ENCODE measurements at regions of chr3 and their contacts with region 1.

Region 1: GRCh38 chr3:37210230-37210629 is 35.8 kb upstream of the LRRFIP2 start:
- DNase-seq: no peak
- H3K4me3 ChIP-seq: no peak overlapping the region
- H3K27ac ChIP-seq: no peak overlapping the region
- H3K4me1 ChIP-seq: no peaks in the 10 kb centered on the region
- CTCF ChIP-seq: no peak

Region 2: GRCh38 chr3:36729204-36730056 is 480.8 kb before region 1 on chr3:
- CTCF ChIA-PET with region 1: no interaction called
- POLR2A ChIA-PET with region 1: no interaction called
- intact Hi-C with region 1: loop called (anchors 1 kb)
- DNase-seq: peak; percentile 55
- H3K4me3 ChIP-seq: no peak overlapping the region
- H3K27ac ChIP-seq: no peak overlapping the region
- H3K4me1 ChIP-seq: no peaks in the 10 kb centered on the region
- CTCF ChIP-seq: peak; percentile 92

Region 3: GRCh38 chr3:37024092-37024491 is 186.1 kb before region 1 on chr3:
- CTCF ChIA-PET with region 1: no interaction called
- POLR2A ChIA-PET with region 1: interaction called, 3 read pairs
- intact Hi-C with region 1: loop called (anchors 2 kb)
- DNase-seq: peak; percentile 16
- H3K4me3 ChIP-seq: no peak overlapping the region
- H3K27ac ChIP-seq: peak overlapping the region; percentile 32
- H3K4me1 ChIP-seq: peaks cover 17% of the 10 kb centered on the region
- CTCF ChIP-seq: peak; percentile 50

Region 4: GRCh38 chr3:37054370-37054769 is 155.9 kb before region 1 on chr3:
- CTCF ChIA-PET with region 1: no interaction called
- POLR2A ChIA-PET with region 1: no interaction called
- intact Hi-C with region 1: loop called (anchors 10 kb)
- DNase-seq: peak; percentile 22
- H3K4me3 ChIP-seq: no peak overlapping the region
- H3K27ac ChIP-seq: no peak overlapping the region
- H3K4me1 ChIP-seq: peaks cover 12% of the 10 kb centered on the region
- CTCF ChIP-seq: no peak

Region 5: DNA sequence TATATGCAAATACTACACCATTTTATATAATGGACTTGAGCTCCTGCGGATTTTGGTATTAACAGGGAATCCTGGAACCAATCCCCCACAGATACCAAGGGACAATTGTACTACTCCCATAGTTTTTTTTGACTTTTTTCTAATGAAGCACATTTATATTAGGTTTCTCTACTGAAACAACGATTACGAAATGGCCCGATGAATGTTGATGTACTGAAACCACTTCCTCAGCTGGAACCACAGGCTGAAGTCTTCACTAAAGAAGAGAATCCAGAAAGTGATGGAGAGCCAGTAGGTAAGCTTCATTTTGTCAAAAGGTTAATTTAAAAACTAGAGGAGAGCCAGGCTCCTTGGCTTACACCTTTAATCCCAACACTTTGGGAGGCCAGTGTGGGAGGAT is 85.7 kb after region 1 on chr3:
- CTCF ChIA-PET with region 1: no interaction called
- POLR2A ChIA-PET with region 1: no interaction called
- intact Hi-C with region 1: no loop called
- DNase-seq: no peak
- H3K4me3 ChIP-seq: no peak overlapping the region
- H3K27ac ChIP-seq: no peak overlapping the region
- H3K4me1 ChIP-seq: no peaks in the 10 kb centered on the region
- CTCF ChIP-seq: no peak

Region 6: DNA sequence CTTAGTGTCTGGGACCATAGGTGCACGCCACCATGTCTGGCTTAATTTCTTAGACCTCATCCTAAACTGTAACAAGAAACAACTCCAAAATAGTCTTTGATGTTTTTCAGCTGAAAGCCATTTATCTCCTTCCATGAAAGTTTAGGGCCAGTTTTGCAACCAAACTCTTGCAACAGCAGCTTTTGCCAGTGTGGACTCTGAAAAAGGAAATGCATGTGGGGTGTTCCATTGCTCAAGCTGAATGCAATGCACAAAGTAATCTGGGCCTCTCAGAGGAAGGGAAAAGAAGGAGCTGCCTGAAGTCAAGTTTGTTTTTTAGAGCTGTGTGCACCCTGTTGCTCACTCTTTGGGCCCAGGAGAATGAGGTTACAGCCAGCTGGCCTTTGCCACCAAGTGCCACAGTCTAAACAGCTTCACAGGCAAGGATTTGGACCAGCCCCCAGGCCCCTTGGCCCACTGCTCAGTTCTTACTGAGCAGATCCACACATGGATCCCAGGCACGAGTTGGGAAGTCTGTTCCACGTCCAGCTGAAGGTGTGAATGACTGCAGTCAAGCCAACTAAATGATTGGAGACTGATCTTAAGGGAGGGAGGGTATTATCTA is 176.5 kb after region 1 on chr3:
- CTCF ChIA-PET with region 1: no interaction called
- POLR2A ChIA-PET with region 1: interaction called, 10 read pairs
- intact Hi-C with region 1: no loop called
- DNase-seq: no peak
- H3K4me3 ChIP-seq: no peak overlapping the region
- H3K27ac ChIP-seq: no peak overlapping the region
- H3K4me1 ChIP-seq: no peaks in the 10 kb centered on the region
- CTCF ChIP-seq: no peak